CD8-positive, alpha-beta T cell (primary cell): ENCODE measurements at regions of chr17 and their contacts with region 1.

Region 1: GRCh38 chr17:76278952-76279741 is 14.0 kb downstream of the UBALD2 start:
- DNase-seq: peak; percentile 67 to 95 (median 85)
- ATAC-seq: peak; percentile 91
- H3K4me3 ChIP-seq: no peak overlapping the region
- H3K4me3 Mint-ChIP-seq: no peak overlapping the region
- H3K27ac ChIP-seq: no peak overlapping the region
- H3K27ac Mint-ChIP-seq: no peak overlapping the region
- H3K4me1 ChIP-seq: peaks cover 27% of the 10 kb centered on the region
- H3K4me1 Mint-ChIP-seq: peaks cover 16% of the 10 kb centered on the region
- H3K27me3 ChIP-seq: no peaks in the 10 kb centered on the region
- H3K27me3 Mint-ChIP-seq: no peaks in the 10 kb centered on the region
- CTCF ChIP-seq: peak; percentile 89

Region 2: GRCh38 chr17:76103274-76104139 is 175.6 kb before region 1 on chr17 and contains the start of gene EXOC7:
- CTCF ChIA-PET with region 1: interaction called, 21 read pairs
- POLR2A ChIA-PET with region 1: no interaction called
- intact Hi-C with region 1: no loop called
- DNase-seq: peak; percentile 83 to 97 (median 93)
- ATAC-seq: peak; percentile 93
- H3K4me3 ChIP-seq: peak within 1 kb of the TSS; percentile 74 to 75
- H3K4me3 Mint-ChIP-seq: peak within 1 kb of the TSS; percentile 98
- H3K27ac ChIP-seq: peak within 1 kb of the TSS; percentile 61 to 77
- H3K27ac Mint-ChIP-seq: peak within 1 kb of the TSS; percentile 95
- H3K4me1 ChIP-seq: peaks cover 21% of the 10 kb centered on the region
- H3K4me1 Mint-ChIP-seq: peaks cover 29% of the 10 kb centered on the region
- H3K27me3 ChIP-seq: no peaks in the 10 kb centered on the region
- H3K27me3 Mint-ChIP-seq: no peaks in the 10 kb centered on the region
- CTCF ChIP-seq: no peak
- total RNA-seq, gene EXOC7: 97.3 to 101 TPM

Region 3: DNA sequence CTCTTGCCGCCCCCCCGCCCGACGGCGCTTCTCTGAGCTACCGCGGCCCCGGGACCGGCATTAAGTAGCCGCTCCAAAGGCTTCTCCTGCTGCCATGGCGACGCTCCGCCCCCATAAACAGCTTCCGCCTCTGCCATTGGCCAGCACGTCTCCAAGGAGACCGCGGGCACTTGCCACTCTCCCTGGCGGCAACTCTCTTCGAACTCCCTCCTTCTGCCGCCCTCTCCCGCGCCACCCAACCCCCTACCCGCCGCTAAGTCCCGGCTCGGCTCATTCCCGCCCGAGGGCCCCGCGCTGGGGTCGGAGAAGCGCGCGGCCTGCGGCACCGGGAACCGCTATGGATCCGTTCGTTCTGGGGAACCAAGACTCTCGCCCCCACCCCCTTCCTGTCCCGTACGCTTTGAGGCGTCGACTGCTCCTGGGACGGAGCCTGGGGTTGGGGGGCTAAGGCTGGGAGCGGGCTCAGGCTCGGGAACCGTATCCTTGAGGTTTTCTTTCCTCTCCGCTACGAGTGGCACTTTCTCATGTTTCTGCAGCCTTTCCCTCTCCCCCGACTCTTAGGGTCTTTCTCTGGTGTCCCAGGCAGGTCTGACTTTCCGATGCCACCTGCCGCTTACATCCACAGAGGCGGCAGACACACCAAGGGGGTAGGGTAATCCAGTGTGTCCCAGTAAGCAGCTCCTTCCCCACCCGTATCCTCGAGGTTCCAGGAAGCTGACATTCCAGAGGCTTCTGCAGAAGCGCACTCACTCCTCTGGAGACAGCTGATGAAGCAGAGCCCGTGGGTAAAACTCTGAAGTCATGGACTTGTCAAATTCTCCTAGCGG is 137.7 kb before region 1 on chr17 and contains the start of gene FOXJ1:
- CTCF ChIA-PET with region 1: interaction called, 59 read pairs
- POLR2A ChIA-PET with region 1: interaction called, 8 read pairs
- intact Hi-C with region 1: loop called (anchors 1 kb)
- DNase-seq: peak; percentile 86 to 96 (median 91)
- ATAC-seq: peak; percentile 55
- H3K4me3 ChIP-seq: peak within 1 kb of the TSS; percentile 54 to 67
- H3K4me3 Mint-ChIP-seq: peak within 1 kb of the TSS; percentile 88
- H3K27ac ChIP-seq: peak within 1 kb of the TSS; percentile 45 to 59
- H3K27ac Mint-ChIP-seq: peak within 1 kb of the TSS; percentile 88
- H3K4me1 ChIP-seq: peaks cover 74% of the 10 kb centered on the region
- H3K4me1 Mint-ChIP-seq: peaks cover 65% of the 10 kb centered on the region
- H3K27me3 ChIP-seq: peaks cover 0 to 8% of the 10 kb centered on the region in 2 experiments
- H3K27me3 Mint-ChIP-seq: no peaks in the 10 kb centered on the region
- CTCF ChIP-seq: no peak
- total RNA-seq, gene FOXJ1: 2.2 to 2.7 TPM

Region 4: GRCh38 chr17:76182016-76182764 is 97.0 kb before region 1 on chr17:
- CTCF ChIA-PET with region 1: interaction called, 127 read pairs
- POLR2A ChIA-PET with region 1: interaction called, 6 read pairs
- intact Hi-C with region 1: loop called in 1 of 2 experiments (anchors 1 kb)
- DNase-seq: peak; percentile 90 to 98 (median 93)
- ATAC-seq: peak; percentile 77
- H3K4me3 ChIP-seq: no peak overlapping the region
- H3K4me3 Mint-ChIP-seq: peak overlapping the region; percentile 64
- H3K27ac ChIP-seq: peak overlapping the region; percentile 42 to 46
- H3K27ac Mint-ChIP-seq: peak overlapping the region; percentile 95
- H3K4me1 ChIP-seq: peaks cover 73% of the 10 kb centered on the region
- H3K4me1 Mint-ChIP-seq: peaks cover 65% of the 10 kb centered on the region
- H3K27me3 ChIP-seq: no peaks in the 10 kb centered on the region
- H3K27me3 Mint-ChIP-seq: no peaks in the 10 kb centered on the region
- CTCF ChIP-seq: peak; percentile 69

Region 5: GRCh38 chr17:76219670-76220383 is 59.3 kb before region 1 on chr17:
- CTCF ChIA-PET with region 1: interaction called, 10 read pairs
- POLR2A ChIA-PET with region 1: interaction called, 3 read pairs
- intact Hi-C with region 1: no loop called
- DNase-seq: no peak
- ATAC-seq: no peak
- H3K4me3 ChIP-seq: no peak overlapping the region
- H3K4me3 Mint-ChIP-seq: no peak overlapping the region
- H3K27ac ChIP-seq: no peak overlapping the region
- H3K27ac Mint-ChIP-seq: peak overlapping the region; percentile 27
- H3K4me1 ChIP-seq: no peaks in the 10 kb centered on the region
- H3K4me1 Mint-ChIP-seq: peaks cover 43% of the 10 kb centered on the region
- H3K27me3 ChIP-seq: no peaks in the 10 kb centered on the region
- H3K27me3 Mint-ChIP-seq: no peaks in the 10 kb centered on the region
- CTCF ChIP-seq: no peak

Region 6: DNA sequence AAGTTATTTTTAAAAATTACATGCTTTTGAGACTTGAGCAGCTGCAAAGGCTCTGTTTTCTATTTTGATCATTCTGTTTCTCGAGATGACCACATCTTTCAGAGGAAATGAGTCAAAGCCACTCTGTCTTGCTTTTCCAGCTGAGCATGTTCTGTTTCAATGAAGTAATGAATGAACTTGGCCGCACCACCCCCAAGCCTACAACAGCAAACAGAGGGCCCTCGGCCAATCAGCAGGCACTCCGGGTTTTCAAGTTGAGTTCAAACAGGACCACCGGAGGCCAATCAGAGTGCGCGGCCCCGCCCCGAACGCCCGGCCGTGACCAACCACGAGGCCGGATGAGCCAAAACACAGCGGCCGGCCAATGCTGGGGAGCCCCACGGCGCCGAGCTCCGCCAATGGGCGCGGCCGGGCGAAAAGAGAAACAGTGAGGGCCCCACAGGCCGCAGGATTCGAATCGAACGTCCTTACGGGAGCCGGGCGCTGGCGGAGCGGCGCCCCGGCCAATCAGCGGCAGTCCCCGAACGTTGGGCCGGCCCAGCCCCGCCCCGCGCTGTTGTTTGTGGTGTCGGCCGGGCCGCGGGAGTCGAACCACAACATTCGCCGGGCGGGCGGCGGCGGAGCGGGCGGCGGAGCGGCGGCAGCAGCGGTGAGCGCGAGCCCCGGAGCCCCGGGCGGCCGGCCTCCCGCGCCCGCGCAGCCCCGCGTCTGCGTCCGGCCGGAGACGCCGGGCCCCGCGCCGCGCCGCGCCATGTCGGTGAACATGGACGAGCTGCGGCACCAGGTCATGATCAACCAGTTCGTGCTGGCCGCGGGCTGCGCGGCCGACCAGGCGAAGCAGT is 14.2 kb before region 1 on chr17 and contains the start of gene UBALD2:
- CTCF ChIA-PET with region 1: interaction called, 61 read pairs
- POLR2A ChIA-PET with region 1: interaction called, 17 read pairs
- intact Hi-C with region 1: no loop called
- DNase-seq: peak; percentile 97 to 99 (median 98)
- ATAC-seq: peak; percentile 80
- H3K4me3 ChIP-seq: peak within 1 kb of the TSS; percentile 76 to 94
- H3K4me3 Mint-ChIP-seq: peak within 1 kb of the TSS; percentile 90
- H3K27ac ChIP-seq: peak within 1 kb of the TSS; percentile 74 to 79
- H3K27ac Mint-ChIP-seq: peak within 1 kb of the TSS; percentile 95
- H3K4me1 ChIP-seq: peaks cover 68% of the 10 kb centered on the region
- H3K4me1 Mint-ChIP-seq: peaks cover 60% of the 10 kb centered on the region
- H3K27me3 ChIP-seq: no peaks in the 10 kb centered on the region
- H3K27me3 Mint-ChIP-seq: no peaks in the 10 kb centered on the region
- CTCF ChIP-seq: no peak
- total RNA-seq, gene UBALD2: 241 to 249 TPM